ENCODE measurements at regions of chr17 and their contacts with region 1.

Region 1: GRCh38 chr17:55487695-55488429 is 23.4 kb downstream of the SMIM36 start:
- DNase-seq: no peak
- H3K4me3 ChIP-seq: no peak overlapping the region
- H3K27ac ChIP-seq: no peak overlapping the region
- H3K4me1 ChIP-seq: no peaks in the 10 kb centered on the region
- H3K27me3 ChIP-seq: no peaks in the 10 kb centered on the region
- CTCF ChIP-seq: no peak

Region 2: DNA sequence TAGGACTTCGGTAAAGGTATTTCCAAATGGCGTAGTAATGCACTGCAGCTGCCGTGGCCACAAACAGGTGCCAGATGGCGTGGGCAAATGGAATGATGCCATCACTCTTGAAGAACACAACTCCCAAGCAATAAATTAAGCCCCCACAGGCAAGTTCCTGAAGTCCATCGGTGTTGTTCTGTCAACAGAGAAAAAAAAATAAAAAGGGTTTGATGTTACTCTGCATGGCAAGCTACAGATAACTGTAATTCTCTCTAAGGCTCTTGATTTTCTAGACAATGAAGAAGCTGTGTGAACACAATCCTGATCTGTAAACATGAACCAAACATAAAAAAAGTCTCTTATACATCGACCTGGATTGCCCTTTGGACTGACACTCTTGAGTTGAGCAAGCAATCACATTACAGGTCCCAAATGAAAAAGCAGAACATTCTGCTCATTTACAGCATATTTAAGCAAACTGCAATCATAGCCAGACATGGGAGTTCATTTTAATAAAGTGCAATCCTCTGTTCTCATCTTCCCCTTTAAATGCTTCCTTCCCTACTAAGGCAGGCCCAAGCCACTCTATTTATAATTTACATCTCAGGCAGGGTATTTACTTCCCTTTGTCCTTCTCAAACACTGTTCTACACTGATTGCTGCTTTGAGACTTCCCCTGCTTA is 93.4 kb before region 1 on chr17:
- CTCF ChIA-PET with region 1: no interaction called
- dilution Hi-C with region 1: no loop called
- in situ Hi-C with region 1: no loop called
- intact Hi-C with region 1: loop called (anchors 5 kb)
- DNase-seq: no peak
- H3K4me3 ChIP-seq: no peak overlapping the region
- H3K27ac ChIP-seq: no peak overlapping the region
- H3K4me1 ChIP-seq: no peaks in the 10 kb centered on the region
- H3K27me3 ChIP-seq: no peaks in the 10 kb centered on the region
- CTCF ChIP-seq: no peak

Region 3: DNA sequence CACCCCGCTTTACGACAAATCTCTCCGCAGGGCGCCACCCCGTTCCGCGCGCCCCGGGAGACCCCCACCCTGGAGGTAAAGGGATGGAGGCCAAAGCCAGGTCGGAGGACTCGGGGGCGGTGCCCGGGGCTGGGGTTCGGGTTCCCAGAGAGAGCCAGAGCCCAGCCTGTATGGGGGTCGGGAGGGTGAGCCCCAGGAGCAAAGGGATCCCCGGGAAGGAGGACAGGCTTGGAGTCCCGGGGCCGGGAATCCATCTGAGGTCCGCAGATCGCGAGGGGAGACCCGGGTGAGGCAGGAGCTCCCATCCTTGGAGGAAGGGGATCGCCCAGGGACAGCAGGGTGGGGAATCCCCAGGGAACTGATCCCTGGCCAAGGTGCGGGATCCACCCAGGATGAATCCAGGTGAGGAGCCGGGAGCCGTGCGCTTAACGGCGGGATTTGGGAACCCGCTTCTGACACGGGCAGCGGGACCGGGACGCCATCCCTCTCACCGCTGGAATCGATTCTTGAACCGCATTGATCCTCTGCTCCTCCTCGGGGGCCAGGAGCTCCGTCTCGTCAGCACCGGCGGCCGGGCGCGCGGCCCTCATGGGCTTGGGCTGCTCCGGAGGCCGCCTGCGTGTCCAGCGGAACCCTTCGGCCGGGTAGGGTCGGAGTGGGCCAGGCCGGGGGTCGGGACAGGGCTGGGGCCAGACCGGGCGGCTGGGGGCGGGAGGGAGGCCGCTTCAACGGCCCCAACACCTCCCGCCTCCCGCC is 66.5 kb before region 1 on chr17 and contains the start of gene MMD:
- CTCF ChIA-PET with region 1: no interaction called
- dilution Hi-C with region 1: no loop called
- in situ Hi-C with region 1: no loop called
- intact Hi-C with region 1: no loop called
- DNase-seq: peak; percentile 63
- H3K4me3 ChIP-seq: peak within 1 kb of the TSS; percentile 84 to 92 (median 85)
- H3K27ac ChIP-seq: peak within 1 kb of the TSS; percentile 89
- H3K4me1 ChIP-seq: peaks cover 10% of the 10 kb centered on the region
- H3K27me3 ChIP-seq: no peaks in the 10 kb centered on the region
- CTCF ChIP-seq: no peak
- total RNA-seq, gene MMD: 7.8 to 9.0 TPM

Measured in mammary epithelial cell (primary cell).